Heart left ventricle (tissue), 16 donors: ENCODE measurements at regions of chr1 and their contacts with region 1.

Region 1: DNA sequence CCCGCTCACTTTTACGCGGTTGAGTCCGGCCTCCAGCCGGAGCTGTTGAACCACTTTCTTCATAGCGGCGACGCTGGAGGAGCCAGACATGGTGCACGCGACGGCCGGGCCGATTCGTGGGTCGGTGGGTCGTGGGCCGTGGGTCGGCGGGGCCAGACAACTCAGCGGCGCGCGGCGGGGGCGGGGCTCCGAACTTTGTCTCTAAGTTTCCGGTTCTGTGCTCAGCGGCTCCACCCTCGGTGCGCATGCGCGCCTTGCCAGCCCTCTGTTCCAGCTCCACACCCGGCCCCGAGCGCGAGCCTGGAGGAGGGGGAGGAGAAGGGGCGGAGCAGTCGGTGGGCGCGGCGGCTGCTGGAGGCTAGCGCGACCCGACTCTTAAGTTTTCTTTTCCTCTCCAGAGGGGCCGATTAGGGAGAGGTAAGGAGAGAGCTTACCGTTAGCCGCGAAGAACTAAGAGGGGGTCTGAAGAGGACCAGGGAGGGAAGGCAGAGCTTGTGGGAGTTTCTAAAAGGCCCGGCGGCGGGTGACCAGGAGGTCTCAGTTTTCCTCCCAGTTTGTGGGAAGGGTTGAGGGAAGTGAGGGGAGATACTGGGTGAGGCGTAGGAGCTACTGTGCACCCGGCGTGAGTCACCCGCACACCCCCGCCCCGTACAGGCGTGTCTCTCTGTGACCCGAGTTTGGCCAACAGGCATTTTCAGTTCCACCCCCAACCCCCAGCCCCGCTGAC is at the starts of genes GNG5 and SPATA1:
- DNase-seq: peak; percentile 99 to 100 (median 99)
- ATAC-seq: peak; percentile 96 to 98 (median 98)
- H3K4me3 ChIP-seq: peak within 1 kb of the TSS; percentile 47 to 91 (median 82)
- H3K27ac ChIP-seq: peak within 1 kb of the TSS; percentile 89 to 99 (median 96)
- H3K4me1 ChIP-seq: peaks cover 0 to 51% (median 32%) of the 10 kb centered on the region in 12 donors
- H3K27me3 ChIP-seq: no peaks in the 10 kb centered on the region
- CTCF ChIP-seq: peak in 1 of 12 donors; percentile 7
- POLR2A ChIP-seq: peak in 1 of 2 donors; percentile 72
- total RNA-seq, gene GNG5: 129 to 217 (median 160) TPM
- total RNA-seq, gene SPATA1: 0.82 to 2.0 (median 1.2) TPM in 8 of 9 donors, not detected in the other

Region 2: GRCh38 chr1:84298328-84298683 is 207.9 kb before region 1 on chr1:
- intact Hi-C with region 1: loop called in 1 of 10 experiments (anchors 10 kb)
- DNase-seq: peak; percentile 61 to 83 (median 66)
- ATAC-seq: peak; percentile 72 to 91 (median 82)
- H3K4me3 ChIP-seq: peak overlapping the region; percentile 69 to 93 (median 82)
- H3K27ac ChIP-seq: peak overlapping the region; percentile 78 to 92 (median 86)
- H3K4me1 ChIP-seq: peaks cover 0 to 42% (median 27%) of the 10 kb centered on the region in 12 donors
- H3K27me3 ChIP-seq: no peaks in the 10 kb centered on the region
- CTCF ChIP-seq: no peak
- POLR2A ChIP-seq: peak in 1 of 2 donors; percentile 59

Region 3: GRCh38 chr1:84478876-84479868 is 27.0 kb before region 1 on chr1 and contains the start of gene RPF1:
- intact Hi-C with region 1: loop called in 3 of 10 experiments (anchors 1 to 2 kb)
- DNase-seq: peak; percentile 66 to 87 (median 74)
- ATAC-seq: peak; percentile 92 to 98 (median 96)
- H3K4me3 ChIP-seq: peak within 1 kb of the TSS; percentile 45 to 88 (median 79)
- H3K27ac ChIP-seq: peak within 1 kb of the TSS; percentile 70 to 96 (median 84)
- H3K4me1 ChIP-seq: peaks cover 0 to 32% (median 20%) of the 10 kb centered on the region in 12 donors
- H3K27me3 ChIP-seq: peaks cover 0 to 38% (median 8%) of the 10 kb centered on the region in 9 donors
- CTCF ChIP-seq: no peak
- POLR2A ChIP-seq: peak; percentile 40 to 59
- total RNA-seq, gene RPF1: 30.3 to 63.9 (median 34.5) TPM

Region 4: GRCh38 chr1:84489766-84490165 is 16.4 kb before region 1 on chr1:
- intact Hi-C with region 1: loop called in 1 of 10 experiments (anchors 2 kb)
- DNase-seq: no peak
- ATAC-seq: no peak
- H3K4me3 ChIP-seq: no peak overlapping the region
- H3K27ac ChIP-seq: no peak overlapping the region
- H3K4me1 ChIP-seq: peaks cover 0 to 14% (median 0%) of the 10 kb centered on the region in 12 donors
- H3K27me3 ChIP-seq: no peaks in the 10 kb centered on the region
- CTCF ChIP-seq: no peak
- POLR2A ChIP-seq: no peak

Region 5: DNA sequence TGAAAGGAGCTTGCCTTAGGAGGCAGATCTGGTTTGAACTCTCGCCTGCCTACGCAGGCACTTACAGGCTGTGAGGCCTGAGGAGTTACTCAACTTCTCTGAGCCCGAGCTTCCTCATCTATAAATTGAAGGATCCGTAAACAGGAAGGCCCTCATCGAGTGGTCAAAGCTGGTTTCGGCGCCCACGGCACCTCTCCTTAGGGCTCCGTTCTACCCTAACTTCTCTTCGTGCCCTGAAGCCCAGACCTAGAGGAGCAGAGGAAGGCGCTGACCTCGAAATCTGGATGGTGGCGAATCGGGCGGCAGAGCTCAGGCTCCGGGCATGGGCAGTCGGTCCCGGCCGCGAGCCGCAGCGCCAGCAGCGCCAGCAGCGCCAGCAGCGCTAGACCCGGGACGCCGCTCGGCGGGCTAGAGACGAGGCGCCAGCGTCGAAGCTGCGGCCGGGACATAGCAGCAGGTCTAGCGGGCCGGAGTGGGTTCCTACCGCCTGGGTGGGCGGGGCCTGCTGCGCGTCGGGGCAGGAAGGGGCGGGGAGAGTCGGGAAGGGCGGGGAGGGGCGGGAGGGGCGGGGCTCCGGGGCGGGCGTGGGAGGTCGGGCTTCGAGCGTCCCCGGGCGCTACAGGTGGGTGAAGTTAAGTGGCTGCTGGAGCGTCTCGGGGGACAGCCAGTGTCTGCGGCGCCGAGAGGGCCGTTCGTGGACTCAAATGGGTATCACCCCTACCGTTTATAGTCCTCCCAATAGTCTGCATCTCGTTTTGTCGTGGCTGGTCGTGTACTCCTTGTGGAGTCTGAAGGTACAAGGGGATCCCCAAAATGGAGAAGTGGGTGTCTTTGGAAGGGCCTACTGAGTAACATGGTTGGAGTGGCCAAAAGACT is 68.0 kb after region 1 on chr1 and contains the start of gene CTBS:
- intact Hi-C with region 1: loop called in 9 of 10 experiments (anchors 2 to 10 kb)
- DNase-seq: peak; percentile 91 to 95 (median 92)
- ATAC-seq: peak; percentile 95 to 99 (median 98)
- H3K4me3 ChIP-seq: peak within 1 kb of the TSS; percentile 60 to 92 (median 76)
- H3K27ac ChIP-seq: peak within 1 kb of the TSS; percentile 90 to 100 (median 97)
- H3K4me1 ChIP-seq: peaks cover 0 to 27% (median 14%) of the 10 kb centered on the region in 12 donors
- H3K27me3 ChIP-seq: no peaks in the 10 kb centered on the region
- CTCF ChIP-seq: peak in 1 of 12 donors; percentile 13
- POLR2A ChIP-seq: peak in 1 of 2 donors; percentile 81
- total RNA-seq, gene CTBS: 6.6 to 19.9 (median 7.8) TPM

Region 6: DNA sequence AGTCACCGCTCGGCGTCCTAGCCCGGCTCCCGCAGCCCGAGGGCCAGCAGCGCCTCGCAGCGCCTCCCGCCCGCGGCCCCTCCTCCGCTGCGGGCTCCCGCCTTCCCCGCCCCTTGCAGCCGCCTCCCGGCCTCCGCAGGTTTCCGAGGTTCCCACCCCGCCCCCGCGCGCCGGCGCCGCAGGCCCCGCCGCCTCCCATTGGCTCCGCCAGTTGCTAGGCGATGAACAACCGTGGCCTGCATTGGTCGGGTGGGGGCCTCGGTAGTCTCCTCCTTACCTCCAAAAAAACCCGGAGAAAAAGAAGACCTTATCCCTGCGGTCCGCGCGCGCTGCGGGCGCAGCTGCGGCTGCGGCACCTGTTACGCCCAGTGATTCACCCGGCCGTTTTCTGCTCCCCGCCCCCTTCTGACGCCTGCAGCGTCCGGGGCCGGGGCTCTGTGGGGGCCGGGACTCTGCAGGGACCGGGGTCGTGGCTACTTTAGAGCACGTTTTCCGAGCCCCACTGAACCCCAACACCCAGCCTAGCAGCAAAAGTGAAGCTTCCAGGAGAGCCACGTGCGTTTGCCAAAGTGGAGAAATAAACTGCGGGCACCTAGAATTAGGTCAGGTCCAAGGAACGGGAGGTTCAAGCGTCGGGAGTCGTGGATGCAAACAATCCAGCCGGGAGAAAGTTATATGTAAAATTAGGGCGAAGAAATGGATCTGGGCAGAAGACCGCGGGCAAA is 184.4 kb after region 1 on chr1 and contains the start of gene SSX2IP:
- intact Hi-C with region 1: loop called in 1 of 10 experiments (anchors 10 kb)
- DNase-seq: peak; percentile 97 to 99 (median 98)
- ATAC-seq: peak; percentile 97 to 99 (median 98)
- H3K4me3 ChIP-seq: peak within 1 kb of the TSS; percentile 65 to 96 (median 88)
- H3K27ac ChIP-seq: peak within 1 kb of the TSS; percentile 31 to 90 (median 83)
- H3K4me1 ChIP-seq: peaks cover 0 to 31% (median 10%) of the 10 kb centered on the region in 12 donors
- H3K27me3 ChIP-seq: no peaks in the 10 kb centered on the region
- CTCF ChIP-seq: no peak
- POLR2A ChIP-seq: peak in 1 of 2 donors; percentile 68
- total RNA-seq, gene SSX2IP: 4.5 to 18.5 (median 13.7) TPM

Region 7: GRCh38 chr1:84712276-84712874 is 206.2 kb after region 1 on chr1:
- intact Hi-C with region 1: no loop called
- DNase-seq: no peak
- ATAC-seq: no peak
- H3K4me3 ChIP-seq: no peak overlapping the region
- H3K27ac ChIP-seq: peak overlapping the region in 2 of 12 donors; percentile 2 to 6
- H3K4me1 ChIP-seq: no peaks in the 10 kb centered on the region
- H3K27me3 ChIP-seq: no peaks in the 10 kb centered on the region
- CTCF ChIP-seq: no peak
- POLR2A ChIP-seq: no peak